ENCODE measurements at regions of chr17 and their contacts with region 1.

Region 1: GRCh38 chr17:44210342-44211192 is 8.9 kb downstream of the UBTF start:
- DNase-seq: peak; percentile 94
- ATAC-seq: peak; percentile 99
- H3K4me3 Mint-ChIP-seq: peak overlapping the region; percentile 69
- H3K27ac Mint-ChIP-seq: peak overlapping the region; percentile 76
- H3K4me1 Mint-ChIP-seq: peaks cover 41% of the 10 kb centered on the region
- H3K27me3 Mint-ChIP-seq: no peaks in the 10 kb centered on the region

Region 2: GRCh38 chr17:44095642-44096496 is 114.7 kb before region 1 on chr17:
- CTCF ChIA-PET with region 1: no interaction called
- DNase-seq: no peak
- ATAC-seq: no peak
- H3K4me3 Mint-ChIP-seq: no peak overlapping the region
- H3K27ac Mint-ChIP-seq: no peak overlapping the region
- H3K4me1 Mint-ChIP-seq: peaks cover 19% of the 10 kb centered on the region
- H3K27me3 Mint-ChIP-seq: no peaks in the 10 kb centered on the region

Region 3: DNA sequence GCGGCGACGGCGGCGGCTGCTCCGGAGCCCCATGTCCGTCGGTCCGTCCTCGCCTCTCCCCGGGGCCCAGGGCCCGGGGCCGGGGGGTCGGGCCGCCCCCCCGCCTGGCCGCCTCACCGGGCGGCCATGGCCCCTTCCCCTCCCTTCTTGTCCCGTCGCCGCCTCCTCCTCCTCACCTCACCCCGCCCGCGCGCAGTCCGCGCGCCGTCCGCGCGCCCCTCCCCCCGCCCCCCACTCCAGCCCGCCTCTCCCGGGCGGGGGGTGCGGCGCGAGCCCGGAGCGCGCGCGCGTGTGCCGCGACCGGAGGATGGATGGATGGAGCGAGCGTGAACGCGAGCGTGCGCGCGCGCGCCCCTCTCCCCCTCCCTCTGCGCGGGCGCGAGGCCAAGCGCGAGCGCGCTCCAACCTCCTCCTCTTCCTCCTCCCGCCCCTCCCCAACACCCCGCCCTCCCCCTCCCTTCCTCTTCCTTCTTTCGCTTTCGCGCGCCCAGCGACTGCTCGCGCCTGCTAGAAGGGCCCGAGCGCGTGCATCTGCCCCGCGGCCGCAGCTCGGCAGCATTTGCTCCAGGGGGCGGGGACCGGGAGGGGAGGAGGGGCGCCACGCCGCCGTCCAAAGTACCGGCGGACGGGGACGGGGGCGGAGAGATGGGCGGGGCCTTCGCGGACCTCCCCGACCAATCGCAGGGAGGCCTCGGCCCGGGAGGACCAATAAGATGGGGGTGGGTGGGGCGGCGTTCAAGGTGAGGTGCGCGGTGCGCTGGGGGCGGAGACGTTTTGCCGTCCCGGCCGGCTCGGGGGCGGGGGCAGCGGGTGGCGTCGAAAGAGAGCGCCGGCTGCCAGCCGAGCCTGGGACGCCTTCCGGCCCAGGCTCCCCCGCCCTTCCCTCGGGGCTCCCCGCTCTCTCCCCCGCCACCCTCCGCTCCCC is 10.8 kb before region 1 on chr17 and contains the start of gene ATXN7L3:
- CTCF ChIA-PET with region 1: interaction called, 67 read pairs
- DNase-seq: peak; percentile 100
- ATAC-seq: peak; percentile 80
- H3K4me3 Mint-ChIP-seq: peak within 1 kb of the TSS; percentile 89
- H3K27ac Mint-ChIP-seq: peak within 1 kb of the TSS; percentile 94
- H3K4me1 Mint-ChIP-seq: peaks cover 40% of the 10 kb centered on the region
- H3K27me3 Mint-ChIP-seq: no peaks in the 10 kb centered on the region
- total RNA-seq, gene ATXN7L3: 106 to 122 TPM

Region 4: DNA sequence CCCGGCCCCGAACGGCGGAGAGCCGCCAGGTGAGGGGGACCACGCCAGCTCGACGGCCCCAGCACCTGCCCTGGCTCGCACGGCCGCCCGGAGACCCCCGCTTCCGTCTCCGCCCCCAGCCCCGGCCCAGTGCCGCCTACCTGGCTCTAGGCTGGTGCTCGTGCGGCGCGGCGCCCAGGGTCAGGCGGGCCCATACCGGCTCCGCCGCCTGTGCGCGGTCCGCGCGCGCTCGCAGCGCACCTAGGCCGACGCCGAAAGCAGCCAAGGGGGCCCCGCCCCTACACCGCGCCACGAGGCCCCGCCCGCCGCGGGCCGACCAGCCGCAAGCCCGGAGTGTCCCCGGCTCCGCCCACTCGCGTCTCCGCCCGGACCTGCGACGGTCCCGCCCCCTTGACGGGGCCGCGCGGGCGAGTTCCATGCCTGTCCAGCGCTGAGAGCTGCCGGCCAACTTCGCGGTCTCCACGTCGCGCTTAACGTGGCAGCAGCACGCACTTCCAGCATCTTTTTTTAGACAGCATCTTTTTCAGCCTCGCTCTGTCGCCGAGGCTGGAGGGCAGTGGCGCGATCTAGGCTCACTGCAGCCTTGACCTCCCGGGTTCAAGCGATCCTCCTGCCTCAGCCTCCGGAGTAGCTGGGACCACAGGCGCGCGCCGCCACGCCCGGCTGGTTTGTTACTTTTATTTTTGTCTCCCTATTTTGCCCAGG is 114.2 kb after region 1 on chr17 and contains the start of gene SLC25A39:
- CTCF ChIA-PET with region 1: interaction called, 94 read pairs
- DNase-seq: peak; percentile 95
- ATAC-seq: peak; percentile 82
- H3K4me3 Mint-ChIP-seq: peak within 1 kb of the TSS; percentile 85
- H3K27ac Mint-ChIP-seq: peak within 1 kb of the TSS; percentile 97
- H3K4me1 Mint-ChIP-seq: peaks cover 26% of the 10 kb centered on the region
- H3K27me3 Mint-ChIP-seq: no peaks in the 10 kb centered on the region
- total RNA-seq, gene SLC25A39: 103 to 133 TPM

Region 5: GRCh38 chr17:44344939-44345453 is 134.4 kb after region 1 on chr17 and contains the start of gene GRN:
- CTCF ChIA-PET with region 1: interaction called, 64 read pairs
- DNase-seq: peak; percentile 92
- ATAC-seq: peak; percentile 99
- H3K4me3 Mint-ChIP-seq: peak within 1 kb of the TSS; percentile 82
- H3K27ac Mint-ChIP-seq: peak within 1 kb of the TSS; percentile 9
- H3K4me1 Mint-ChIP-seq: peaks cover 31% of the 10 kb centered on the region
- H3K27me3 Mint-ChIP-seq: peaks cover 11% of the 10 kb centered on the region
- total RNA-seq, gene GRN: 56.5 to 69.2 TPM

Region 6: DNA sequence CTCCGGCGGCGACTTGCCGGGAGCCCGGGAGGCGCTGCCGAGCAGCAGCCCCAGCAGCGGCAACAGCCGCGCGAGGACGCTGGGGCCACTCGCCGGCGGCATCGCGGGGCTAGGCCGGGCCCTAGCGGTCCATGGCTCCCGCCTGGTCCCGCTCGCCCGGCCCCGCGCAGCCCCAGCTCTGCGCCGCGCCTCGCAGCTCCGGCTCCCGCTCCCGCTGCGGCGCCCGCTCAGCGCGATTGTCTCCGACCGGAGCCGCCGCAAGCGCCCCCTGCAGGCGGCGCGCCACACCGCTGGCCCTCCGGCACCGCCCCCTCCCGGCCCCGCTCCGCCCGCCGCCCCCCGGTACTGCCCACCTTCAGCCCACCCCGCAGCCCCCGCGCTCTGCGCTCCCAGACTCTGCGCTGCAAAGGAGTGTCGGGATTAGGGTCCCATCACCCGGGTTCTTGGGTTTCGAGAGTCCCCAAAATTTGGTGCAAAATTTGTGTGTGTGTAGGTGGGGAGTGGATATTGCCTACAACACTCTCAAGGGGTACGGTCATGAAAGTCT is 153.1 kb after region 1 on chr17 and contains the start of gene FAM171A2:
- CTCF ChIA-PET with region 1: interaction called, 10 read pairs
- DNase-seq: peak; percentile 68
- ATAC-seq: peak; percentile 95
- H3K4me3 Mint-ChIP-seq: peak within 1 kb of the TSS; percentile 56
- H3K27ac Mint-ChIP-seq: no peak within 1 kb of the TSS
- H3K4me1 Mint-ChIP-seq: no peaks in the 10 kb centered on the region
- H3K27me3 Mint-ChIP-seq: peaks cover 51% of the 10 kb centered on the region
- total RNA-seq, gene FAM171A2: 0.26 TPM in 1 of 2 experiments, not detected in the other

Measured in activated CD8-positive, alpha-beta memory T cell treated with anti-CD3 and anti-CD28 coated beads, Interleukin-2, amount 10 ng/mL, durations not matched to agents 7 days and 5 days (primary cell).